ENCODE measurements at regions of chr14 and their contacts with region 1.

Region 1: DNA sequence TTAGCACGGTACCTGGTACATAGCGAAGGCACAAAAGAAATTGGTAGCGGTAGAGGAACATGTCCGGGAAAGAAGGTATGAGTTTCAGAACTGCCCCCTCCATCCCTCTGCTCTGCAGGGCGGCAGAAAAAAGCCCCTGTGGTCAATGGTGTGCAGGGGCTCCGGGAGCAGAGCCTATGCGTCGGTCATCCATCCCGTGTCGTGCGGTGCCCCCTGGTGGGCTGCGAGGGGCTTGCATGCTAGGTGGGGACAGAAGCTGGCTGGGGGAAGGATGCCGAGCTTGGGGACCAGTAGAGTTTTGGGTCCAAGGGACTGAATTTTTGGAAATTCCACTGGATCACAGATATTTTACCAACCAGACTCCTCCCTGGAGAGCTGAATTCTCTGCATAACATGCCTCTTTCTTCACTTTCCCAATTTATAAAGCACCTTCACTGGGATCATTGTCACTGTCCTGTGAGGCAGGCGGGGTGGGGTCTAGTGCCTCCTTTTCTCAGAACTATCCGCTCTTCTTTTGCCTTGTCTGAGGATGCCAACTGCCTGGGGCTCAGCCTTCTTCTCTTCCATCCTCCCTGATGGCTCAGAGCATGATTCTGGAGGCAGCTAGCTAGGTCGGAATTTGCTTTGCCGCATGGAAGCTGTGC is 148.7 kb downstream of the SMOC1 start:
- DNase-seq: peak; percentile 84
- ATAC-seq: peak; percentile 68
- H3K4me3 Mint-ChIP-seq: no peak overlapping the region
- H3K27ac Mint-ChIP-seq: no peak overlapping the region
- H3K4me1 Mint-ChIP-seq: no peaks in the 10 kb centered on the region
- H3K27me3 Mint-ChIP-seq: peaks cover 2% of the 10 kb centered on the region

Region 2: DNA sequence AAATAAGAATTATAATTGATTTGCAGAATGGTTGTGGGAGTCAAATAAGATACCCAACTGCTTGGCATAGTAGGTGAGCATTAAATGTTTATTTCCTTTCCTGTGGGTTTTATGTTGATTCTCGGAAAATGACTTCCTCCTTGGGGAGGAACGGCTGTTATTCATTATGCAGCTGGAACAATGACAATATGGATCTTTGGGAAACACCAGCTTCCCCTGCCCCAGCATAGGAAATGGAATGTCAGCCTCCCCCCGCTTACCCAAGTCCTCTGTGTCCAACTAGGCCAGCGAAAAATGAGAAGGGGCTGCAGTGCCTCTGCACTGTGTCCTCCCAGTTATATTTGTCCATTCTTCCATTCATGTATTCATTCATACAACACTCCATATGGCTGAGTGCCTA is 441.5 kb before region 1 on chr14:
- CTCF ChIA-PET with region 1: interaction called, 4 read pairs
- POLR2A ChIA-PET with region 1: no interaction called
- intact Hi-C with region 1: loop called in 1 of 2 experiments (anchors 5 kb)
- DNase-seq: no peak
- ATAC-seq: no peak
- H3K4me3 Mint-ChIP-seq: no peak overlapping the region
- H3K27ac Mint-ChIP-seq: no peak overlapping the region
- H3K4me1 Mint-ChIP-seq: no peaks in the 10 kb centered on the region
- H3K27me3 Mint-ChIP-seq: peaks cover 2% of the 10 kb centered on the region

Region 3: DNA sequence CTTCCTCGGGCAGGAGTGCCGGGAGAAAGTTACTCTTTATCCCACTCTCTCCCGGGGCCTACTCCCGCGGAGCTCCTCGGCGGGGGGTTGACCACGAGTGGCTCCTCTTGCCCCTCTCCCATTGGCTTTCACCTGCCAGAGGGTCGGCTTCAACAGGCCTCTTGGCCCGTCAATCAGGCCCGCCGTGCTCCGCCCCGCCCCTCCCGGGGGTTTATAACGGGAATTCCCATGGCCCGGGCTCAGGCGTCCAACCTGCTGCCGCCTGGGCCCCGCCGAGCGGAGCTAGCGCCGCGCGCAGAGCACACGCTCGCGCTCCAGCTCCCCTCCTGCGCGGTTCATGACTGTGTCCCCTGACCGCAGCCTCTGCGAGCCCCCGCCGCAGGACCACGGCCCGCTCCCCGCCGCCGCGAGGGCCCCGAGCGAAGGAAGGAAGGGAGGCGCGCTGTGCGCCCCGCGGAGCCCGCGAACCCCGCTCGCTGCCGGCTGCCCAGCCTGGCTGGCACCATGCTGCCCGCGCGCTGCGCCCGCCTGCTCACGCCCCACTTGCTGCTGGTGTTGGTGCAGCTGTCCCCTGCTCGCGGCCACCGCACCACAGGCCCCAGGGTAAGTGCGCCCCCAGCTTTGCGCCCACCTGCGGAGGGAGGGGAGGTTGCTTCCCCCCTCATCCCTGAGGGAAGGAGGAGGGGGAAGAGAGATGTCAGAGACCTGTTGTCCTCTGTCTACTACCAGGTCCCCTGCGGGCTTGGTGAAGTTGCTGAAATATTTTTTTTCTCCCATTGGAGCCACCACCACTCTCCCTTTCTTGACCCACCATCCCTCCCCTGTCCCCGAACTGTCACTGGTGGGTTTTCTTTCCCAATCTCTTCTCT is 148.5 kb before region 1 on chr14 and contains the start of gene SMOC1:
- CTCF ChIA-PET with region 1: interaction called, 8 read pairs
- POLR2A ChIA-PET with region 1: no interaction called
- intact Hi-C with region 1: loop called in 1 of 2 experiments (anchors 5 kb)
- DNase-seq: peak; percentile 64
- ATAC-seq: peak; percentile 80
- H3K4me3 Mint-ChIP-seq: no peak within 1 kb of the TSS
- H3K27ac Mint-ChIP-seq: no peak within 1 kb of the TSS
- H3K4me1 Mint-ChIP-seq: no peaks in the 10 kb centered on the region
- H3K27me3 Mint-ChIP-seq: peaks cover 53% of the 10 kb centered on the region
- total RNA-seq, gene SMOC1: not detected

Region 4: GRCh38 chr14:70045844-70046535 is 18.1 kb after region 1 on chr14:
- CTCF ChIA-PET with region 1: interaction called, 11 read pairs
- POLR2A ChIA-PET with region 1: no interaction called
- intact Hi-C with region 1: no loop called
- DNase-seq: peak; percentile 48
- ATAC-seq: no peak
- H3K4me3 Mint-ChIP-seq: no peak overlapping the region
- H3K27ac Mint-ChIP-seq: no peak overlapping the region
- H3K4me1 Mint-ChIP-seq: no peaks in the 10 kb centered on the region
- H3K27me3 Mint-ChIP-seq: peaks cover 19% of the 10 kb centered on the region

Measured in activated CD4-positive, alpha-beta T cell treated with anti-CD3 and anti-CD28 coated beads for 36 hours (primary cell).